ENCODE measurements at regions of chr5 and their contacts with region 1.

Region 1: GRCh38 chr5:171913987-171914273 is 92.5 kb downstream of the FBXW11 start:
- DNase-seq: no peak
- H3K4me3 ChIP-seq: no peak overlapping the region
- H3K27ac ChIP-seq: no peak overlapping the region
- H3K4me1 ChIP-seq: peaks cover 14 to 69% (median 35%) of the 10 kb centered on the region in 6 donors
- H3K27me3 ChIP-seq: no peaks in the 10 kb centered on the region
- CTCF ChIP-seq: no peak
- POLR2A ChIP-seq: no peak

Region 2: GRCh38 chr5:172006321-172007174 is 92.6 kb after region 1 on chr5 and contains the start of gene FBXW11:
- intact Hi-C with region 1: loop called (anchors 10 kb)
- DNase-seq: peak; percentile 99
- H3K4me3 ChIP-seq: peak within 1 kb of the TSS; percentile 72 to 98 (median 88)
- H3K27ac ChIP-seq: peak within 1 kb of the TSS; percentile 92 to 100 (median 98)
- H3K4me1 ChIP-seq: peaks cover 27 to 57% (median 50%) of the 10 kb centered on the region in 6 donors
- H3K27me3 ChIP-seq: no peaks in the 10 kb centered on the region
- CTCF ChIP-seq: peak in 2 of 11 experiments; percentile 9 to 26
- POLR2A ChIP-seq: peak; percentile 42 to 93 (median 54)
- total RNA-seq, gene FBXW11: 40.6 to 72.1 (median 64.5) TPM

Region 3: GRCh38 chr5:172044631-172045314 is 130.8 kb after region 1 on chr5:
- intact Hi-C with region 1: loop called (anchors 5 kb)
- DNase-seq: peak; percentile 61
- H3K4me3 ChIP-seq: no peak overlapping the region
- H3K27ac ChIP-seq: no peak overlapping the region
- H3K4me1 ChIP-seq: peaks cover 0 to 23% (median 4%) of the 10 kb centered on the region in 6 donors
- H3K27me3 ChIP-seq: no peaks in the 10 kb centered on the region
- CTCF ChIP-seq: no peak
- POLR2A ChIP-seq: no peak